PC-3 (cell line): ENCODE measurements at regions of chr11 and their contacts with region 1.

Region 1: DNA sequence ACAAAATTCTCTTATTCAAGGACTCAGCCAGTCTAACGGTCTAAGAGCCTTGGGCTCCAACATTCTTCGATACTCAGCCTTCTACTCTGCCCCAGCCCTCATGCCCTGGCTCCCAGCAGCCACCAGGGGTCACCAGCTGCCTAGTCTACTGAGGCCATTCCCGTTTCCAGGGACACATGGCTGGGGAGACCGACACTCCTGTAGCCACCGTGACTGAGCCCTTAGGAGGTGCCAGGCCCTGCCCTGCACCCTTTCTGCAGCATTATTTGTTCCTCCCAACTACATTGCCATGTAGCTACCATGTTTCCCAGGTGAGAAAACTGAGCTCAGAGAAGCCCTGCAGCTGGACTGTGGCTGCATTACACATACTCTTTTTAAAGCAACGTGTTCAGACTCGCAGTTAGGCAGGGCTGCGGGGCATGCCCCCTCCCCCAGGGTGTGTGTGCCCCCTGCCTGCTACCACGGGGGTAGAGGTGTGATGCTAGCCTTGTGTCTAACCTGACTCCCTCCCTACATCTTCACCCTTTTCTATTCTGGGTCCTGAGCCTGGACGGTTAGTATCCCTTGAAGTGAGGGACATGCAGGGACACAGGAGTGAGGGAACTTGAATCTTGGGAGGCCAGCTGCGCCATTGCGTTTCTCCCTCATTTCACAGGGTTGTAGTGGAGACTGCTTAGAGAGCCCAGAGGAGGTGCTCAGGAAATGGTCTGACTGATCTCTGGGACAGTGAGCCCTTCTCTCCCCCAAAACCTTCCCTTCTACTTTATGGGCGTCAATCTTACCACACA is 17.5 kb downstream of the ATG16L2 start:
- DNase-seq: peak; percentile 76
- ATAC-seq: peak; percentile 93
- H3K4me3 ChIP-seq: no peak overlapping the region
- H3K27ac ChIP-seq: no peak overlapping the region
- H3K4me1 ChIP-seq: no peaks in the 10 kb centered on the region
- H3K27me3 ChIP-seq: no peaks in the 10 kb centered on the region
- CTCF ChIP-seq: peak; percentile 91

Region 2: GRCh38 chr11:73177778-73178577 is 346.3 kb after region 1 on chr11:
- CTCF ChIA-PET with region 1: interaction called, 15 read pairs
- POLR2A ChIA-PET with region 1: no interaction called
- intact Hi-C with region 1: loop called (anchors 1 kb)
- DNase-seq: peak; percentile 92
- ATAC-seq: peak; percentile 88
- H3K4me3 ChIP-seq: no peak overlapping the region
- H3K27ac ChIP-seq: no peak overlapping the region
- H3K4me1 ChIP-seq: peaks cover 21% of the 10 kb centered on the region
- H3K27me3 ChIP-seq: no peaks in the 10 kb centered on the region
- CTCF ChIP-seq: peak; percentile 97